Thyroid gland (tissue), 4 donors: ENCODE measurements at regions of chr6 and their contacts with region 1.

Region 1: GRCh38 chr6:16770701-16771569 is 9.7 kb upstream of the ATXN1 start:
- DNase-seq: peak; percentile 78 to 84
- H3K4me3 ChIP-seq: no peak overlapping the region
- H3K27ac ChIP-seq: no peak overlapping the region
- H3K4me1 ChIP-seq: peaks cover 0 to 31% of the 10 kb centered on the region in 2 donors
- H3K27me3 ChIP-seq: no peaks in the 10 kb centered on the region
- CTCF ChIP-seq: peak; percentile 71 to 98 (median 90)
- POLR2A ChIP-seq: no peak

Region 2: DNA sequence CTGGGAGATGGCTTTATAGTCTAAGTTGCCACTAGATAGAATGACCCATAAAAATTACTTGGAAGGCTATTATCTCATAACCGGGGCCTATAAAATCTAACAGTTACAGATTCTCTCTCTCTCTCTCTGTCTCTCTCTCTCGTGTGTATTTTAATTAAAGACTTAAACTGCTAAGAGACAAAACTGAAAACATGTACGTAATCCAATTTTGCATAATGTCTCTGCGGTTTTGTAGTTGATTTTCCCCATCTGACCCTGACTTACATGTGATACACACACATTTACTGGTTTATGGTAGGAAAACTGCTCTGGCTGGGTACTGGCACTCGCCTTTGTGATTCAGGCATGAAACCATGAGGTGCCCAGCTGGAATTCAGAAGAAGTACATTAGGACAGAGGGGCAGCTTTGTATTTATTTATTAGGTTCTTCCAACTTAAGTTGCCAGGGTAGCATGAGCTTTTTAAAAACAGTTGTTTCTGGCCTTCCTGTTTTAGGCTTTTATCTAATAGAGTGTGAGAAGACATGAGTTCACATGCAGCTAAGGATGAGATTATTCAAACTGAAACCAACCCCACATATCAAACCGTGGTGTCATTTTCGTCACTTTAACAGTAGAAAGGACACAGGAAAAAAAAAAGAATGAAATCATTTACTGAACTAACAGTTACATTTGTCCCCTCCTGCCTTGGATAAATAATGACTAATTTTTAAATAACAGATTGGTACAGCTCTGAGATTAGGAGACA is 350.0 kb before region 1 on chr6:
- intact Hi-C with region 1: loop called (anchors 10 kb)
- DNase-seq: no peak
- H3K4me3 ChIP-seq: no peak overlapping the region
- H3K27ac ChIP-seq: no peak overlapping the region
- H3K4me1 ChIP-seq: peaks cover 0 to 4% of the 10 kb centered on the region in 2 donors
- H3K27me3 ChIP-seq: no peaks in the 10 kb centered on the region
- CTCF ChIP-seq: no peak
- POLR2A ChIP-seq: no peak